Ovary (tissue), 10 donors: ENCODE measurements at regions of chr3 and their contacts with region 1.

Region 1: DNA sequence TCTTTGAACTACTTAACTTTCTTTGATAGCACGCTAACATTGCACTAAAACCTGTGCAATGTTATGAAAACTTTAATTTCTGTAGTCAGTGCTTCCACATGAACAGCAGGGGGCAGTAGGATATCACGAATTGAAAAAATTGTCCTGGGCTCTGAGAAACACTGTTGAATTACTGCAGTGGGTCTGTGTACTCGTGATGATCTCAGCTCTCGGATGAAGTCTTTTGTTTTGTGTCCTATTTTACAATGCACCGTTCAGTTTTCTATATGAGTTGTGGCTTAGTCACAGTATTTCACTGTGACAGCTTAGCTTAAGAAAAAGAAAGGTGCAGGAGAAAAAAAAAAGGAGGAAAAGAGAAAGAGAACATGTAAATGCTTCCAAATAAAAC is 141.3 kb upstream of the CCDC54 start:
- DNase-seq: peak in 2 of 5 donors; percentile 39 to 66
- H3K4me3 ChIP-seq: peak overlapping the region; percentile 40
- H3K27ac ChIP-seq: peak overlapping the region; percentile 23 to 70
- H3K4me1 ChIP-seq: peaks cover 3% of the 10 kb centered on the region
- H3K27me3 ChIP-seq: no peaks in the 10 kb centered on the region
- CTCF ChIP-seq: peak; percentile 75 to 94 (median 94)
- EP300 ChIP-seq: no peak
- POLR2A ChIP-seq: no peak

Region 2: DNA sequence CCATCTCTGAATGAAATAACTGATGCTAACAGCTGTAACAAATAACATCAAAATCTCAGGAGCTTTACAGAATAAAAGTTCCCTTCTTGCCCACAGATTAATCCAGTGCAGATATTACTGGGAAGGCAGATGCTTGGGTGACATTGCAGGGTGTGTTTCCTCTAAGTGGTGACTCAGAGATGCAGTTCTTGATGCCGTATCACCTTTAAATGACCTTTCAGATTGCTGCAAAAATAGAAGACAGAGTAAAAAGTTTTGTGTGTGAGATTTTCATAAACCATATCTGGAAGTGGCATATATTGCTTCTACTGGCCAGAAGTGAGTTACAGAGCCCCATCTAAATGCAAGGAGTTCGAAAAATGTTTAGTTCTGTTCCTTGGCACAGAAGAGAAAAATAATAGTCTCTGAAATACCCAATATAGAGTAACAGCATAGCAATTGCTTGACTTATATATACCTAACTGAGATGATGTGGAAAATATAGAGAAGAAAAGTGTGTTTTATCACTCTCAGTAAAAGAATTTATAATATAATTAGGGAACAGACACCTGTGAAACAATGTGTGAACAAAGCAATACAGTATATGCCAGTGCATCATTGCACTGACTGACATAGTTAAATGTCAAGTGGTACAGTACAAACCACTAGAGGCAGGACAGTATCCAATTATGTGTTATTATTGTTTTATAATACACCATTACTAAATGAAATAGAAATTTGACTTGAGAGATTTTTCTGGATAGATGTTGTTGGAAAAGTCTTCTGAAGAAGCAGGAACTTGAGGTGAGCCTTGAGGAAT is 936.4 kb before region 1 on chr3:
- intact Hi-C with region 1: no loop called
- DNase-seq: no peak
- H3K4me3 ChIP-seq: no peak overlapping the region
- H3K27ac ChIP-seq: no peak overlapping the region
- H3K4me1 ChIP-seq: no peaks in the 10 kb centered on the region
- H3K27me3 ChIP-seq: no peaks in the 10 kb centered on the region
- CTCF ChIP-seq: no peak
- EP300 ChIP-seq: no peak
- POLR2A ChIP-seq: no peak

Region 3: DNA sequence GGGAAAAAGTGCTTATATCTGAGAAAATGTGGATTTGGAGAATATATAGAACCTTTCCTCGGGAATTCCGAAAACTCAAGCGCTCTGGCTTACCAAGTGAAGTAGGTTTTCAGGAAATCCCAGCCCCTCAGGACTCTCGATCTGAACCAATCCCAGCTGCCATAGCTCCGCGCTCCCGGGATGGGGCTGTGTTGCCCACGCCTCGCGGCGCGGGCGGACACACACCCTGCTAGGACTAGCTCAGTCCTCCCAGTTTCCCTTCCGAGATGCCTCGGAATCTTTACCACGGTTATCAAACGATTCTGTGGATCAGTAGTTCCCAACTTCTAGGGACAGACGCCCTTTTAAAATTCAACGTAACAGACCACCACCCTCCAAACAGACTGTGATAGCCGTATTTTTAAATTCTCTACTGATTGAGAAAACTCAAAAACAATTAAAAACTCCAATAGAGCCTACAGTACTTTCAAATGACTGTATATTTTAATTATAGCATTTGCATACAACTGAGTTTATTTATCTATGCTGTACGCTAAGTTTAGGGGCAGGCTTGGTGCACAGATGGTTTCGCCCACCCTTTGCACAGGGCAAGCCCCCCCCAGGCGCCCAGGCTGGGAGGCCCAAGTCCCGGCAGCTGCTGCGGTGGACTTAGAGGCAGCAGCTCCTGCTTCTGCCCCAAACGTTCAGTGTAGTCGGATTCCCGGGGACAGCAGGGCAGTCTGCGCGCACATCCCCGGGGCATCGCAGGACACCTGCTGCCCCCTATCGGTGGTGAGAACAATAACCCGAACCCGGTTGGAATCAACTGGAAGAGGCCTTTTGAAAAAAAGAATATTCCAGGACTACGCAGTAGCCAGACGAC is 193.6 kb after region 1 on chr3:
- intact Hi-C with region 1: loop called in 2 of 4 experiments (anchors 2 to 10 kb)
- DNase-seq: peak; percentile 81 to 84 (median 83)
- H3K4me3 ChIP-seq: peak overlapping the region; percentile 77
- H3K27ac ChIP-seq: peak overlapping the region; percentile 84 to 99
- H3K4me1 ChIP-seq: no peaks in the 10 kb centered on the region
- H3K27me3 ChIP-seq: no peaks in the 10 kb centered on the region
- CTCF ChIP-seq: peak; percentile 80 to 88 (median 86)
- EP300 ChIP-seq: no peak
- POLR2A ChIP-seq: peak; percentile 37

Region 4: GRCh38 chr3:107522510-107523288 is 286.8 kb after region 1 on chr3 and contains the start of gene BBX:
- intact Hi-C with region 1: loop called in 1 of 4 experiments (anchors 10 kb)
- DNase-seq: peak; percentile 88 to 98 (median 94)
- H3K4me3 ChIP-seq: peak within 1 kb of the TSS; percentile 61
- H3K27ac ChIP-seq: peak within 1 kb of the TSS; percentile 90 to 96
- H3K4me1 ChIP-seq: peaks cover 4% of the 10 kb centered on the region
- H3K27me3 ChIP-seq: no peaks in the 10 kb centered on the region
- CTCF ChIP-seq: no peak
- EP300 ChIP-seq: no peak
- POLR2A ChIP-seq: peak; percentile 50
- total RNA-seq, gene BBX: 61.8 to 114 (median 95.9) TPM

Region 5: DNA sequence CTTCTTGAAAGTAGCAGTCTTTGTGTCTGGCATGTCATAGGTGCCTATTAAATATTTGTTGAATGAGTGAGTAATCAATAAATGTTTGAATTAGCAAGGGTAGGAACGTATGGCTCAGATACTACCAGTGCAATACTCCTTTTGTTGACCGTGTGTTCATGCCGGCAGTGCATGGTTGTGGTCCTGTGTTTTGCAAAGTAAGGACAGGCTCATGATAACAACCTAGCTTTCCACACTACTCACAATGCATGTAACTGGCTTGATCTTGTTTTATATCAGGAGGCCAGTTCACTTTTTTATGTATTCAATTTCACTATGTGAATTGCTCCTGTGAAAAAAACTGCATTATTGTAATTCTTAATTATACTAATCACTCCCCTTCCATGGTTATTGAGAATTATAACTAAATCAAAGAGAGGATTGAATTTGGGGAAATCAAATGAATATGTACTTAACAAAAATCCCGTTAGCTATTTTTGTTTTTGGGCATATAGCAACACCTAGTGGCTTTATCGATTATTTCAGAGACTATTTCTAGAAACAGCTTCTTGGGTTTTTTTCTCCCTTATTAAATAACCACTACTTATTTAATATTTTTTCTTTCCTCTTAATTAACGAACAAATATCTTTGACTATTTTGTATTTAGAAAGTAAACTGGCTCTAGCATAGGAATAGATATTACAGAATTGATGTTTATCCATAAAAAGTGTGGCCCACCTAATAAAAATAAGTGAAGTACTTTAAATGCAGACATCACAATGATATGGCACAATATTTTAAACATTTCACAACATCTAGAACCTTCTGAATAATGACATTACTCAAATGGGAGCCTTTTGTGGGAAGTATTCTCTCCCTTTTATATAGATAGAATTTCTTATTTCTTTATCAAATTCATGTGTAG is 505.3 kb after region 1 on chr3:
- intact Hi-C with region 1: loop called in 1 of 4 experiments (anchors 5 kb)
- DNase-seq: no peak
- H3K4me3 ChIP-seq: no peak overlapping the region
- H3K27ac ChIP-seq: no peak overlapping the region
- H3K4me1 ChIP-seq: peaks cover 2% of the 10 kb centered on the region
- H3K27me3 ChIP-seq: no peaks in the 10 kb centered on the region
- CTCF ChIP-seq: peak; percentile 21 to 44 (median 38)
- EP300 ChIP-seq: no peak
- POLR2A ChIP-seq: no peak

Region 6: DNA sequence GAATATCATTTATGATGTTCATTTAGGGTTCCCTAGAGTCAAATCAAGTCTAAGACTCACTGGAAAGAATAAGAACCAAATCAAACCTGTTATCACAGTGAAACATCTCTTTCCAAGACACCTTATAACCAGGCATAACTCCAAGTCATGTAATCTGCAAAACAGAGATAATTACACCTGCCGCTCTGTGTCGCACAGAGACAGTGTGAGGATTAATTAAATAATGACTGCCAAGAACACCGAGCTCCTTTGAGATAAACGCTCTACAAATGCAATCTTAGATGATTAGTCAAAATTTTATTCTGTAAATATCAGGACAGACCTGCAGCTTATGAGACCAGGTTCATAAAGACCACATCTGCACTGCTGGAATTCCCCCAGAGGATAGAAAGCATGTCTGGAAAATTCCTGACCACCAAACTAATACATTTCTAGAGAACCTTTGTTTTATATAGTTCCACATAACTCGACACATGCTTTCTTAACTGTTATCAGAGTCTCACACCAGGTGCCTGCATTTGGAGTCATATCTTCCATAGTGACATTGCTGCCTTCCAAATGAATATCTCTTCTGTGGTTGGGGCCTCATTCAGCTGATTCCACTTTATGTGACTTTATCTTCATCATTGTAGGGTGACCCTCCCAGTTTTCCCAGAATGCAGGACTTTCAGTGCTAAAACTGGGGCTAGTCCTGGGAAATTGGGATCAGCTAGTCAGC is 602.1 kb after region 1 on chr3:
- intact Hi-C with region 1: loop called in 1 of 4 experiments (anchors 5 kb)
- DNase-seq: no peak
- H3K4me3 ChIP-seq: no peak overlapping the region
- H3K27ac ChIP-seq: no peak overlapping the region
- H3K4me1 ChIP-seq: peaks cover 2% of the 10 kb centered on the region
- H3K27me3 ChIP-seq: no peaks in the 10 kb centered on the region
- CTCF ChIP-seq: no peak
- EP300 ChIP-seq: no peak
- POLR2A ChIP-seq: no peak